ENCODE measurements at regions of chr6 and their contacts with region 1.

Region 1: DNA sequence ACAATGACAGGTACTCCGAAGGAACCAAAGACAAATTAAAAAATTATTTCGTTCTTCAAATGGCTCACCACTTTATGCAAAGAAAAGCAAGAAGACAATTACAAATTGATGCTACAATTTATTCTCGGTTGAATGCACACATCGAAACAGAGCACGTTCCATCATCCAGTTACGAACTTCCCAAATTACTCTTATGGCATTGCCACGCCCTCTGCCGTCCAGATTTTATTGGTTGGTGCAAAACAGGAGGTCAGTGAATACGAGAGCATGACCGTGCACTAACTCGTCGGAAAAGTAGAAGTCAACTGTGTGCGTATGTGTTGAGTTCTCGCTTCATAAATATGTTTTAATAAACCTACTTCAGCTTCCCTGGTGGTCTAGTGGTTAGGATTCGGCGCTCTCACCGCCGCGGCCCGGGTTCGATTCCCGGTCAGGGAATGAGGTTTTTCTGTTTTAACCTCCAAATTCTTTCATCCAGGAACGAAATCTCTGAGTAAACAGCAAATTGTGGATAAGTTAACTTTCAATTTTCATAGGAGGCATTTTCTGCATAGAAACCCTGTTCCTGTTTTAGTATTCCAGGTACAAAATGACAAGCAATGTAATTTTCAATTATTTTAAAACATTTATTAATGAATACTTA is 23.2 kb downstream of the ZNF311 start:
- DNase-seq: peak; percentile 93
- ATAC-seq: peak; percentile 46
- H3K4me3 ChIP-seq: peak overlapping the region; percentile 95 to 99
- H3K27ac ChIP-seq: peak overlapping the region; percentile 97
- H3K4me1 ChIP-seq: peaks cover 41% of the 10 kb centered on the region
- H3K27me3 ChIP-seq: no peaks in the 10 kb centered on the region
- CTCF ChIP-seq: no peak

Region 2: DNA sequence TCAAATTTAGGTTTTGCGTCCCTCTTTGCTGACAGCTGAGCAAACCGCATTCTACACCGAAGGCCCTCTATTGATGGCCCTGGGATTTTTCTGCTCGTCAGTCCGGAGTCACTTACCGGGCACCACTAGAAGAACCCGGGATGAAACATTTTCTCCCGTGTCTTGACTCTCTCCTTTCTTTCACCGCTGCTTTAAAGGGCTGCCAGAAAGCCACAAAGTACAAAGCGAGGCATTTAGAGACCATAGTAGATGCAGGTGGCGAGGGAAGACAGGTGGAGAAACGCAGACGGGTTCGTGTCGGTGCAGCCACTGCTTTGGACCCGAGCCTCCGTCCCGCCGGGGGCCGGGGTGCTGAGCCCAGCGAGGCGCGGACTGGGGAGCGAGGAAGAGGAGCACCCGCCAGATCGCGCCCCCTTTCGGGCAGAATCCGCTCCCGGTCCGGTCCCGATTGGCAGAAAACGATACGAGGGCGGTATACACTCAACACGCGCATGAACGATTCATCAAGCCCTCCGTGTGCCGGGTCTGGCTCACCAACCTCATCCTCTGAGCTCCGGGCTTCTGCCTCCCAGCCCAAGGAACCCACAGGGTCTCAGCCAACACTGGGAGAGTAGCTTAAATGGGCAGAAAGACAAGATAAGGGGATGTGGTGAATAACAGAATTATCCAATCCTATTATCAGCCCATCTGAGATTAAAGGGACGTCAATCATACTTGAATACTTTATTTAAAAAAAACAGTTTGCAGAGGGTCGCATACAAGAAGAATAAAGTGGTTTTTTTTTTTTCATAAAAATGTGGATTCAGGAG is 143.1 kb before region 1 on chr6:
- CTCF ChIA-PET with region 1: interaction called, 7 read pairs
- POLR2A ChIA-PET with region 1: no interaction called
- in situ Hi-C with region 1: no loop called
- intact Hi-C with region 1: loop called (anchors 2 kb)
- DNase-seq: no peak
- ATAC-seq: peak; percentile 92
- H3K4me3 ChIP-seq: peak overlapping the region; percentile 67 to 90
- H3K27ac ChIP-seq: peak overlapping the region; percentile 72
- H3K4me1 ChIP-seq: peaks cover 3% of the 10 kb centered on the region
- H3K27me3 ChIP-seq: peaks cover 10% of the 10 kb centered on the region; the same call in 1 of the 2 replicates
- CTCF ChIP-seq: peak; percentile 91

Region 3: GRCh38 chr6:28863604-28864320 is 118.2 kb before region 1 on chr6:
- CTCF ChIA-PET with region 1: no interaction called
- POLR2A ChIA-PET with region 1: interaction called, 7 read pairs
- in situ Hi-C with region 1: no loop called
- intact Hi-C with region 1: loop called (anchors 10 kb)
- DNase-seq: peak; percentile 93
- ATAC-seq: peak; percentile 74
- H3K4me3 ChIP-seq: peak overlapping the region; percentile 83 to 97
- H3K27ac ChIP-seq: peak overlapping the region; percentile 79
- H3K4me1 ChIP-seq: peaks cover 8% of the 10 kb centered on the region
- H3K27me3 ChIP-seq: no peaks in the 10 kb centered on the region
- CTCF ChIP-seq: no peak

Region 4: GRCh38 chr6:28940858-28941680 is 40.9 kb before region 1 on chr6:
- CTCF ChIA-PET with region 1: no interaction called
- POLR2A ChIA-PET with region 1: interaction called, 3 read pairs
- in situ Hi-C with region 1: no loop called
- intact Hi-C with region 1: loop called (anchors 2 kb)
- DNase-seq: peak; percentile 95
- ATAC-seq: peak; percentile 86
- H3K4me3 ChIP-seq: peak overlapping the region; percentile 99 to 100
- H3K27ac ChIP-seq: peak overlapping the region; percentile 84
- H3K4me1 ChIP-seq: peaks cover 17% of the 10 kb centered on the region
- H3K27me3 ChIP-seq: no peaks in the 10 kb centered on the region
- CTCF ChIP-seq: no peak

Region 5: GRCh38 chr6:28953039-28953584 is 28.8 kb before region 1 on chr6:
- CTCF ChIA-PET with region 1: interaction called, 13 read pairs
- POLR2A ChIA-PET with region 1: no interaction called
- in situ Hi-C with region 1: no loop called
- intact Hi-C with region 1: no loop called
- DNase-seq: no peak
- ATAC-seq: peak; percentile 80
- H3K4me3 ChIP-seq: peak overlapping the region; percentile 83 to 88
- H3K27ac ChIP-seq: peak overlapping the region; percentile 67
- H3K4me1 ChIP-seq: peaks cover 6% of the 10 kb centered on the region
- H3K27me3 ChIP-seq: no peaks in the 10 kb centered on the region
- CTCF ChIP-seq: no peak

Region 6: GRCh38 chr6:29016559-29017427 is 34.8 kb after region 1 on chr6:
- CTCF ChIA-PET with region 1: interaction called, 3 read pairs
- POLR2A ChIA-PET with region 1: interaction called, 7 read pairs
- in situ Hi-C with region 1: no loop called
- intact Hi-C with region 1: loop called (anchors 1 kb)
- DNase-seq: peak; percentile 76
- ATAC-seq: peak; percentile 96
- H3K4me3 ChIP-seq: peak overlapping the region; percentile 66 to 99
- H3K27ac ChIP-seq: peak overlapping the region; percentile 81
- H3K4me1 ChIP-seq: no peaks in the 10 kb centered on the region
- H3K27me3 ChIP-seq: no peaks in the 10 kb centered on the region
- CTCF ChIP-seq: peak; percentile 93

Measured in Panc1 (cell line).